ENCODE measurements at regions of chr18 and their contacts with region 1.

Region 1: GRCh38 chr18:58321986-58322385 is 278.0 kb downstream of the NEDD4L start:
- DNase-seq: peak; percentile 7
- H3K4me3 ChIP-seq: no peak overlapping the region
- H3K27ac ChIP-seq: peak overlapping the region in 2 of 4 donors; percentile 57 to 62
- H3K4me1 ChIP-seq: peaks cover 0 to 14% (median 3%) of the 10 kb centered on the region in 3 donors
- H3K27me3 ChIP-seq: no peaks in the 10 kb centered on the region
- CTCF ChIP-seq: peak; percentile 36 to 67 (median 60)
- POLR2A ChIP-seq: no peak

Region 2: GRCh38 chr18:58180738-58181353 is 141.1 kb before region 1 on chr18:
- intact Hi-C with region 1: loop called (anchors 10 kb)
- DNase-seq: no peak
- H3K4me3 ChIP-seq: no peak overlapping the region
- H3K27ac ChIP-seq: no peak overlapping the region
- H3K4me1 ChIP-seq: peaks cover 5 to 24% (median 7%) of the 10 kb centered on the region in 3 donors
- H3K27me3 ChIP-seq: no peaks in the 10 kb centered on the region
- CTCF ChIP-seq: peak; percentile 32 to 84 (median 78)
- POLR2A ChIP-seq: no peak

Region 3: DNA sequence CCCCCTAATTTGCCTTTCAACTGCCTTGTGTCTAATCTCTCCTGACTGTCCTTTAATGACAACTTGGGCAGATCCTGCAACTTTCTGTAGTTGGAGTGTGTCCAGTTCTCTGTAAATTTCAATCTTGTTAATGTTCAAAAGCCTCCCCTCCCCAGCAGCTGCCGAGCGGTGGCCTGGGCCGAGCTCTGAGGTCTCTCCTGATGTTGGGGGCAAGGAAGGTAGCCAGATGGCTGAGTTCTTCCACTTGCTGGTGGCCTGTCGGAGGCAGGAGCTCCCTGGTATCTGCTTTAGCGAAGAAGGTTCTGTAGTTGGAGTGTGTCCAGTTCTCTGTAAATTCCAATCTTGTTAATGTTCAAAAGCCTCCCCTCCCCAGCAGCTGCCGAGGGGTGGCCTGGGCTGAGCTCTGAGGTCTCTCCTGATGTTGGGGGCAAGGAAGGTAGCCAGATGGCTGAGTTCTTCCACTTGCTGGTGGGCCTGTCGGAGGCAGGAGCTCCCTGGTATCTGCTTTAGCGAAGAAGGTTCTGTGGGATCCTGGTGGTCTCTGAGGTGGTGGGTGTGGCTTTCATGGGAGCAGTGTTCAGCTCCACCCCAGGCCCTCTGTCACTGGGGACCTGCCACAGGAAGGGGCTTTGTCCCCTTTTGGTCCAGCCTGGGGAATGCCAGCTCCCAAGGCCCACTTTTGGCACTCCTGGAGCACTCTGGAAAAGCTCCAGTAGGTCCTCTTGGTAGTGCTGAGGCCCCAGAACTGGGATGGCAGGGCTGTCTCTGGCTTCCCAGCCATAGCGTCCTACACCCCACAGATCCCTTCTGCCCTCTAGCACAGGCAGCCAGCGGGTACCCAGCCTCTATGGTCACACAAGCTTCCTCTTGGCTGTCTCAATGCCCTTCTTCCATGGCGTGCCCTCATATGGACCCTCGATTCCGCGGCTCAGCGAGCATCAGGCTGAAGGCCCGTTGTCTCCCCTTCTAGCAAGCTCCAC is 95.0 kb after region 1 on chr18:
- intact Hi-C with region 1: no loop called
- DNase-seq: no peak
- H3K4me3 ChIP-seq: no peak overlapping the region
- H3K27ac ChIP-seq: peak overlapping the region in 1 of 4 donors; percentile 63
- H3K4me1 ChIP-seq: no peaks in the 10 kb centered on the region
- H3K27me3 ChIP-seq: peaks cover 0 to 8% (median 0%) of the 10 kb centered on the region in 4 donors
- CTCF ChIP-seq: no peak
- POLR2A ChIP-seq: no peak